ENCODE measurements at regions of chr5 and their contacts with region 1.

Region 1: GRCh38 chr5:126776497-126777256 is at the start of gene LMNB1:
- DNase-seq: peak; percentile 95
- H3K4me3 ChIP-seq: peak within 1 kb of the TSS; percentile 76 to 89 (median 85)
- H3K27ac ChIP-seq: peak within 1 kb of the TSS; percentile 85
- H3K4me1 ChIP-seq: peaks cover 24% of the 10 kb centered on the region
- H3K27me3 ChIP-seq: no peaks in the 10 kb centered on the region
- CTCF ChIP-seq: no peak
- POLR2A ChIP-seq: no peak
- total RNA-seq, gene LMNB1: 134 and 144 TPM in 2 replicates

Region 2: GRCh38 chr5:126600631-126601511 is 175.8 kb before region 1 on chr5 and contains the start of gene PHAX:
- CTCF ChIA-PET with region 1: interaction called, 10 read pairs
- POLR2A ChIA-PET with region 1: no interaction called
- dilution Hi-C with region 1: no loop called
- intact Hi-C with region 1: loop called (anchors 1 kb)
- DNase-seq: peak; percentile 77
- H3K4me3 ChIP-seq: peak within 1 kb of the TSS; percentile 68 to 85 (median 83)
- H3K27ac ChIP-seq: peak within 1 kb of the TSS; percentile 61
- H3K4me1 ChIP-seq: peaks cover 19% of the 10 kb centered on the region
- H3K27me3 ChIP-seq: no peaks in the 10 kb centered on the region
- CTCF ChIP-seq: peak; percentile 82 to 85
- POLR2A ChIP-seq: peak; percentile 88
- total RNA-seq, gene PHAX: 48.2 and 51.2 TPM in 2 replicates

Region 3: GRCh38 chr5:126676195-126676624 is 100.5 kb before region 1 on chr5:
- CTCF ChIA-PET with region 1: interaction called, 147 read pairs
- POLR2A ChIA-PET with region 1: no interaction called
- dilution Hi-C with region 1: no loop called
- intact Hi-C with region 1: loop called (anchors 1 kb)
- DNase-seq: peak; percentile 56
- H3K4me3 ChIP-seq: no peak overlapping the region
- H3K27ac ChIP-seq: no peak overlapping the region
- H3K4me1 ChIP-seq: no peaks in the 10 kb centered on the region
- H3K27me3 ChIP-seq: peaks cover 3 to 7% of the 10 kb centered on the region in 2 experiments
- CTCF ChIP-seq: peak; percentile 72 to 75
- POLR2A ChIP-seq: no peak

Region 4: DNA sequence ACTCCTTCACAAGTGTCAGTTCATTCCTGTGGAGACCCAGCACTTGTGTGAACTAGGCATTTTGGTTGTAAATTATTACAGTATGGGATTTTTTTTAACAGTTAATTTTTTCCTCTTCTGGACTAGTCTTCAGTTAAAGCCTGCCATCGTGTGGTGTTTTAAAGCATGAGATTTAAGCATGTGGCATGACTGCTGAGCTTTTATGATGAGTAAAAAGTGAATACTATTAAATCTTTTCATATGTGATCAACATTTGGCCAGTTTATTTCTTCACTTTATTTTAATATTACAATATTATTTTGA is 25.3 kb after region 1 on chr5:
- CTCF ChIA-PET with region 1: interaction called, 22 read pairs
- POLR2A ChIA-PET with region 1: interaction called, 7 read pairs
- dilution Hi-C with region 1: no loop called
- intact Hi-C with region 1: no loop called
- DNase-seq: peak; percentile 46
- H3K4me3 ChIP-seq: no peak overlapping the region
- H3K27ac ChIP-seq: no peak overlapping the region
- H3K4me1 ChIP-seq: peaks cover 6% of the 10 kb centered on the region
- H3K27me3 ChIP-seq: no peaks in the 10 kb centered on the region
- CTCF ChIP-seq: no peak
- POLR2A ChIP-seq: no peak

Region 5: DNA sequence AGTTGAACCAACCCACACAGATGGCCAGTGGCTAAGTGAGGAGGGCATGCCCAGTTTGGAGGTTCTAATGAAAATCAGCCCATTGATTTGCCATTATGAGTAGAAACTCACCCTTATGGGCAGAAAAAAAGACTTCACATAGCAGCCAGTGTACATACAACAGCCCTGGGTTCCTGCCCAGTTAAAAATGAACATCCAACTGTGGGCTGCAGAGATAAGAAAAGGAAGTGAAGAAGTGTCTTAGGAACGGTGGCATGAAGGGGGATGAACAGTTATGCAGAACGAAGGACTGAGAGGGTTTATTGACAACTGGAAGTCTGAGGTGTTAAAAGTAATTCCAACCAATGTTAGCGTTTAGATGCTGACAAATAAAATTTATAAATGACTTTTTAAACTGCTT is 135.3 kb after region 1 on chr5:
- CTCF ChIA-PET with region 1: no interaction called
- POLR2A ChIA-PET with region 1: no interaction called
- dilution Hi-C with region 1: no loop called
- intact Hi-C with region 1: no loop called
- DNase-seq: no peak
- H3K4me3 ChIP-seq: no peak overlapping the region
- H3K27ac ChIP-seq: no peak overlapping the region
- H3K4me1 ChIP-seq: peaks cover 7% of the 10 kb centered on the region
- H3K27me3 ChIP-seq: no peaks in the 10 kb centered on the region
- CTCF ChIP-seq: no peak
- POLR2A ChIP-seq: no peak

Region 6: DNA sequence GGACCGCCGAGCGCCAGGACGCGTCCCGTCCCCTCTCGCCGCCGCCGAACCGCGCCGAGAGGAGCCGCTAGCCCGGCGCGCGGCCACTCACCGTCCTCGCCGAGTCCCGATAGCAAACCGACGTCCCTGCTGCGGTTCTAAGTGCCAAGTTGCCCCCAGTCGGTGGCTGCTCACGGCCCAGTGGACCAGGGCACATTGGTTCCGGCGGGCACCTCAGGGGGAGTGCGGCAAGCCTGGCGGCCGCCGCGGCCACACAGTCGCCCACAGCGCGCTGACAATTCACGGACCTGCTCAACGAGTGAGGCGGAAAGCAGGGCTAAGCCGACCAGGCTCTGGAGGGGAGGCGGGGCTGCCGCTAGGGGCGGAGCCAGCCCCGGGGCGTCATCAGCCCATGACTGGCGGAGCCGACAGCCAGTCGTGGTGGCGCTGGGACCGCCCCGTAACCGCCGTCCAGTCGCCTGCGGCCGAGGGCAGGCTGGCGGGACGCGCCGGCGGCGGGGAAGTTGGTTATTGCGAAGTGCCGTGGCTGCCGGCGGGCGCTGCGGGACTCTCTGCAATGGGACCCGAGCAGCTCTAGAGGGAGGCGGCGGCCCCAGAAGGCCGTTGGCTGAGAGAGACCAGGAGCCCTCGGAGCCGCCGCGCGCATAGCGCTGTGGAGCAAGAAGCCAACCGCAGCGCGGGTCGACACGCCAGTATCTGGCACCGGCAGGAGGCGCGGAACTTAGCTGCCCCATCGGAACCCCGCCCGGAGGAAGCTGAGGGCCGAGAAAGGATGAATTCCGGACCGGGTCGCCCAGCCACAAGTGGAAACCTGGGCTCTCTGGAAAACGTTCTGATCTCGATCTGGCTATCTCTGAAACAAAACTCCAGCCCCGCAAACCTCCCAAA is 253.8 kb after region 1 on chr5 and contains the start of gene MARCHF3:
- CTCF ChIA-PET with region 1: interaction called, 3 read pairs
- POLR2A ChIA-PET with region 1: interaction called, 5 read pairs
- dilution Hi-C with region 1: no loop called
- intact Hi-C with region 1: loop called (anchors 1 kb)
- DNase-seq: peak; percentile 98
- H3K4me3 ChIP-seq: peak within 1 kb of the TSS; percentile 83 to 93 (median 88)
- H3K27ac ChIP-seq: peak within 1 kb of the TSS; percentile 78
- H3K4me1 ChIP-seq: peaks cover 11% of the 10 kb centered on the region
- H3K27me3 ChIP-seq: no peaks in the 10 kb centered on the region
- CTCF ChIP-seq: peak in 1 of 2 donors; percentile 25
- POLR2A ChIP-seq: peak; percentile 94
- total RNA-seq, gene MARCHF3: 31.7 and 31.9 TPM in 2 replicates

Region 7: DNA sequence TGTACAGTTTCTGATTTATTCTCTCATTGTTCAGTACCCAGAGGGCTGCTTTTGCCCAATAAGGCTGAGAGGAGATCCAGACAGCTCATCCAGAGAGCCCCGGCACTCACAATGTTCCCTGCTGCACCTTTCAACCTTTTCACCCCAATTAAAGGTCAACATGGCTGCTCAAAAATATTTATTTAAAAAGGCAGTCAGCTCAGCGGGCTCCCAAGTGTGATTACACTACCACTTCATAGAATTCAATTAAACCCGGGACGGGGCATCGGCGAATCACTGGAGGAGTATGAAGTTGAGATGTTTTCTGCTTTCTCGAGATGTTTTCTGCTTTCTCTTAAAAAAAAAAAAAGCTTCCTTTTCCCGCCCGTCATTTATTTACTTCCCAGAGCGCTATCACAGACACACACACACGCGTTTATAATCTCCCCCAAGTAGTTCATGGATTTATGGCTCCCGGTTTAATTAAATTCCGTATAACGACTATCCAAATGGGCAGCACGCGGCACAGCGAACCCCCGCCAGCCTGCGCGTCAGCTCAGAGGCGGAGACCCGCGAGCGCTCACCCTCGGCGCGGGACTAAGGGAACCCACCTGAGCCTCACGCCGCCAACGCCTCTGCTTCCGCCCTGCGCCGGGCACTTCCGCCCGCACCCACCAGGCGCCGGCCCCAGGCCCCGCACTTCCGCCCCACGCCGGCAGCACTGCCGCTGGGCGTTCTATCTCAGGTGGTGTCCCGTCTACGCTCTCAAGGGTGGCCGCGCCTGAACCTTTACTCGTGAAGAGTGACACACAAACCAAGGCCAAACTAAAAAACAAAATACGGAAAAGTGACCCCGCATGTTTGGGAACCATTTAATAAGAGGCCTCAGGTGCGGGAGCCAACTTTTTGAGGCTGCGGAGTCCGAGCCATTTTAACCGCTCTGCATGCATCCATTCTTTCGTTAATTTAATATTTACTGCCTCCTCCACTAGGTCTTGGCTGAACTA is 296.5 kb after region 1 on chr5 and contains the start of gene C5orf63:
- CTCF ChIA-PET with region 1: no interaction called
- POLR2A ChIA-PET with region 1: no interaction called
- dilution Hi-C with region 1: no loop called
- intact Hi-C with region 1: loop called (anchors 1 kb)
- DNase-seq: peak; percentile 45
- H3K4me3 ChIP-seq: peak within 1 kb of the TSS; percentile 32 to 69 (median 56)
- H3K27ac ChIP-seq: peak within 1 kb of the TSS; percentile 72
- H3K4me1 ChIP-seq: peaks cover 61% of the 10 kb centered on the region
- H3K27me3 ChIP-seq: no peaks in the 10 kb centered on the region
- CTCF ChIP-seq: no peak
- POLR2A ChIP-seq: peak; percentile 41
- total RNA-seq, gene C5orf63: 4.0 and 5.3 TPM in 2 replicates